ENCODE measurements at regions of chr5 and their contacts with region 1.

Region 1: GRCh38 chr5:34929150-34929719 is at the start of gene DNAJC21:
- H3K4me3 Mint-ChIP-seq: peak within 1 kb of the TSS; percentile 92
- H3K27ac Mint-ChIP-seq: peak within 1 kb of the TSS; percentile 95
- H3K4me1 Mint-ChIP-seq: peaks cover 20% of the 10 kb centered on the region
- H3K27me3 Mint-ChIP-seq: no peaks in the 10 kb centered on the region

Region 2: GRCh38 chr5:33440482-33441240 is 1488.6 kb before region 1 on chr5 and contains the start of gene TARS1:
- intact Hi-C with region 1: loop called (anchors 5 kb)
- H3K4me3 Mint-ChIP-seq: no peak within 1 kb of the TSS
- H3K27ac Mint-ChIP-seq: no peak within 1 kb of the TSS
- H3K4me1 Mint-ChIP-seq: peaks cover 20% of the 10 kb centered on the region
- H3K27me3 Mint-ChIP-seq: no peaks in the 10 kb centered on the region

Region 3: DNA sequence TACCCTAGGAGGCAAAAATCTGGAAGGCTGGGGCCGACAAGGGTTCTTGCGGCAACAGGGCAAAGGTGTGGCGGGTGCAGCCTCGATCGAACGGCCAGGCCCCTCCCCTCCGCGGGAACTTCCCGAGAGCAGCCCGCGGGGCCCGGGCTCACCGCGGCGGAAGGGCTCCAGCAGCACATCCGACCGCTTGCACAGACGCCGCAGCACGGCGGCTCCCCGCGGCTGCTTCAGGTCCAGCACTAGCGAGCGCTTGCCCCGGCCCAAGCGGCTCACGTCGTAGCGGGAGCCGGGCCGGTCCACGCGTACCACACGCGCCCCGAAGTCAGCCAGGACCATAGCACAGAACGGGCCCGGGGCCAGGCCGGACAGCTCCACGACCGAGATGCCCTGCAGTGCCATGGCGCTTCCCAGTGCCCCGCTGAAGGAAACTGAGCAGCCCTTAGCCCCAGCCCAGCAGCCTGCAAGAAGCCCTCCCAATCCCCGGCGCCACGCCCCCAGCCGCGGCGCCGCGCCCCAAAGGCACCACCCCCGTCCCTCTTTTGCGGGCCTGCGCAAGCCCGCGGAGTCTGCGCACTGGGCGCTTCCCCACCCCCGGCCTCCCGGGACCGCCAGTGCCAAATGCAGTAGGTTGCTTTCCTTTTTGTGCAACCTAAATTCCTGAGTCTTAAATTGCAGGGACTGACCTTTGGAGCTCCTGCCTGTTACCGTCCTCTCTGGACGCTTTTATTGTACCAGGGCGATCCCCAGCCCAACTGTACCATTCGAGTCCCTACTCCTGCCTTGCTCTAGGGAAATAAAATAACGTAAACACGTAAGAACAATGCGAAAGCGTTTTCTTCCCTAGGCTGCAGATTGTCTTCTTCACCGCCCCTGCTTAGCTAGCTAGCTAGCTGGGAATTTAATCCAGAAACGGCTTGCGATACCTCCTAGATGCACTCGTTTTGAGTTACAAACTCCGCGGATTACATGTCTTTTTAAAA is 921.3 kb before region 1 on chr5 and contains the start of gene AMACR:
- intact Hi-C with region 1: loop called (anchors 5 kb)
- H3K4me3 Mint-ChIP-seq: peak within 1 kb of the TSS; percentile 80
- H3K27ac Mint-ChIP-seq: peak within 1 kb of the TSS; percentile 82
- H3K4me1 Mint-ChIP-seq: peaks cover 17% of the 10 kb centered on the region
- H3K27me3 Mint-ChIP-seq: no peaks in the 10 kb centered on the region

Region 4: GRCh38 chr5:34915139-34915855 is 13.9 kb before region 1 on chr5 and contains the starts of genes BRIX1 and RAD1:
- intact Hi-C with region 1: loop called (anchors 1 kb)
- H3K4me3 Mint-ChIP-seq: no peak within 1 kb of the TSS
- H3K27ac Mint-ChIP-seq: no peak within 1 kb of the TSS
- H3K4me1 Mint-ChIP-seq: peaks cover 28% of the 10 kb centered on the region
- H3K27me3 Mint-ChIP-seq: no peaks in the 10 kb centered on the region

Region 5: GRCh38 chr5:36151434-36152323 is 1222.4 kb after region 1 on chr5 and contains the starts of genes LMBRD2 and SKP2:
- intact Hi-C with region 1: loop called (anchors 10 kb)
- H3K4me3 Mint-ChIP-seq: peak within 1 kb of the TSS; percentile 94
- H3K27ac Mint-ChIP-seq: peak within 1 kb of the TSS; percentile 90
- H3K4me1 Mint-ChIP-seq: peaks cover 58% of the 10 kb centered on the region
- H3K27me3 Mint-ChIP-seq: no peaks in the 10 kb centered on the region

Measured in dendritic cell treated with granulocyte-macrophage colony-stimulating factor and Interleukin-4, amounts not matched to agents 40 ng/mL and 50 ng/mL, for 4 days (primary cell).